Naive thymus-derived CD4-positive, alpha-beta T cell (primary cell): ENCODE measurements at regions of chr2 and their contacts with region 1.

Region 1: GRCh38 chr2:197705121-197705911 is at the start of gene MARS2:
- DNase-seq: peak; percentile 89 to 95 (median 93)
- ATAC-seq: peak; percentile 92
- H3K4me3 ChIP-seq: peak within 1 kb of the TSS; percentile 93
- H3K4me3 Mint-ChIP-seq: peak within 1 kb of the TSS; percentile 78 to 96 (median 94)
- H3K27ac ChIP-seq: peak within 1 kb of the TSS; percentile 87
- H3K27ac Mint-ChIP-seq: peak within 1 kb of the TSS; percentile 88 to 99 (median 97)
- H3K4me1 ChIP-seq: peaks cover 29 to 32% of the 10 kb centered on the region in 2 donors
- H3K4me1 Mint-ChIP-seq: peaks cover 33 to 56% (median 48%) of the 10 kb centered on the region in 7 donors
- H3K27me3 ChIP-seq: no peaks in the 10 kb centered on the region
- H3K27me3 Mint-ChIP-seq: peaks cover 0 to 13% (median 7%) of the 10 kb centered on the region in 5 donors
- total RNA-seq, gene MARS2: 8.8 to 15.4 (median 13.6) TPM

Region 2: GRCh38 chr2:196639180-196640030 is 1065.9 kb before region 1 on chr2 and contains the start of gene CCDC150:
- CTCF ChIA-PET with region 1: no interaction called
- POLR2A ChIA-PET with region 1: no interaction called
- intact Hi-C with region 1: loop called (anchors 1 kb)
- DNase-seq: peak; percentile 88 to 95 (median 94)
- ATAC-seq: peak; percentile 100
- H3K4me3 ChIP-seq: peak within 1 kb of the TSS; percentile 86
- H3K4me3 Mint-ChIP-seq: peak within 1 kb of the TSS; percentile 82 to 92 (median 88)
- H3K27ac ChIP-seq: peak within 1 kb of the TSS; percentile 48
- H3K27ac Mint-ChIP-seq: peak within 1 kb of the TSS in 8 of 9 donors; percentile 30 to 78 (median 43)
- H3K4me1 ChIP-seq: peaks cover 7 to 8% of the 10 kb centered on the region in 2 donors
- H3K4me1 Mint-ChIP-seq: peaks cover 4 to 26% (median 19%) of the 10 kb centered on the region in 7 donors
- H3K27me3 ChIP-seq: no peaks in the 10 kb centered on the region
- H3K27me3 Mint-ChIP-seq: peaks cover 0 to 15% (median 0%) of the 10 kb centered on the region in 5 donors
- total RNA-seq, gene CCDC150: 0.13 to 11.2 (median 1.2) TPM

Region 3: DNA sequence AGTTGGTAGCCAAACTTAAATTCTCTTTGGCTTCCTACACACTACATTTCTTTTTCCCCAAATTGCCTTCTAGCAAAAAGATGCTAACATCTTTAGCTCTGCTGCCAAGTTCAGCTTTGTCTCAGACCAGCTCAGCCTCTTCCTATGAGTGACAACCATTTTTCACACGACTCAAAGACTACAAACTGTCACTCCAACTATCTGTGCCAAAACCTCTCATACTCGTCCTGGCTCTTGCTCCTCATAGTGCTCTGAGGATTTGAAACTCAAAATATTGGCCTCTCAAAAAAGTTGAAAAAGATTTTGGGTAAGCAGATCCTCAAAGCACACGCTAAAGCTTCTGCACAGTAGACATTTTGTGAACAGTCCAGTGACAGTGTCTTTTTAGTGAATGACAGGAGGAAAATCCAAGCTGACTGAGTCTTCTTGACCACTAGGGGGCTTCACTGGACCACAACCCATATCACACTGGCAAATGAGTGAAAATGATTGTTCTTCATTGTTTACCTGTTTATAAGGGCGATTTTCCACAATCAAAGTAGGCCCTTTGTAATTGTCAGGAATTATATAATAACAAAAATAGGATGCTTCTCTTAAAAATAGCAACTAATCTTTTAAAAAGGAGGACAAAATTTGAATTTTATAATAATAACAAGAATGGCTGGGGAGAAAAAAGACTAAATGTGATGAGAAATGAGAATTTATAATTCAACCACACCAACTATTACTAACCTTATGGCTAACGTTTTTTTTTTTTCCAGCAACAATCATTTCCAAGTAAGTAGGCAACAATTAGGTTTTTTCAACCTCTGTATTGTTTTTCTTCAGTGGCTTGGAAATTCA is 693.3 kb before region 1 on chr2:
- CTCF ChIA-PET with region 1: no interaction called
- POLR2A ChIA-PET with region 1: no interaction called
- intact Hi-C with region 1: loop called in 1 of 2 experiments (anchors 10 kb)
- DNase-seq: peak in 6 of 9 donors; percentile 11 to 51 (median 40)
- ATAC-seq: peak; percentile 76
- H3K4me3 ChIP-seq: no peak overlapping the region
- H3K4me3 Mint-ChIP-seq: no peak overlapping the region
- H3K27ac ChIP-seq: no peak overlapping the region
- H3K27ac Mint-ChIP-seq: peak overlapping the region; percentile 5 to 90 (median 73)
- H3K4me1 ChIP-seq: peaks cover 0 to 3% of the 10 kb centered on the region in 2 donors
- H3K4me1 Mint-ChIP-seq: peaks cover 0 to 18% (median 9%) of the 10 kb centered on the region in 7 donors
- H3K27me3 ChIP-seq: no peaks in the 10 kb centered on the region
- H3K27me3 Mint-ChIP-seq: no peaks in the 10 kb centered on the region

Region 4: GRCh38 chr2:197499594-197500526 is 205.5 kb before region 1 on chr2 and contains the starts of genes HSPD1 and HSPE1:
- CTCF ChIA-PET with region 1: interaction called, 5 read pairs
- POLR2A ChIA-PET with region 1: interaction called, 5 read pairs
- intact Hi-C with region 1: loop called (anchors 1 kb)
- DNase-seq: peak; percentile 89 to 98 (median 97)
- ATAC-seq: peak; percentile 93
- H3K4me3 ChIP-seq: peak within 1 kb of the TSS; percentile 94
- H3K4me3 Mint-ChIP-seq: peak within 1 kb of the TSS; percentile 84 to 100 (median 94)
- H3K27ac ChIP-seq: peak within 1 kb of the TSS; percentile 90
- H3K27ac Mint-ChIP-seq: peak within 1 kb of the TSS; percentile 83 to 98 (median 95)
- H3K4me1 ChIP-seq: peaks cover 17 to 41% of the 10 kb centered on the region in 2 donors
- H3K4me1 Mint-ChIP-seq: peaks cover 31 to 69% (median 57%) of the 10 kb centered on the region in 7 donors
- H3K27me3 ChIP-seq: no peaks in the 10 kb centered on the region
- H3K27me3 Mint-ChIP-seq: no peaks in the 10 kb centered on the region
- total RNA-seq, gene HSPD1: 127 to 276 (median 137) TPM
- total RNA-seq, gene HSPE1: 46.3 to 127 (median 52.2) TPM

Region 5: DNA sequence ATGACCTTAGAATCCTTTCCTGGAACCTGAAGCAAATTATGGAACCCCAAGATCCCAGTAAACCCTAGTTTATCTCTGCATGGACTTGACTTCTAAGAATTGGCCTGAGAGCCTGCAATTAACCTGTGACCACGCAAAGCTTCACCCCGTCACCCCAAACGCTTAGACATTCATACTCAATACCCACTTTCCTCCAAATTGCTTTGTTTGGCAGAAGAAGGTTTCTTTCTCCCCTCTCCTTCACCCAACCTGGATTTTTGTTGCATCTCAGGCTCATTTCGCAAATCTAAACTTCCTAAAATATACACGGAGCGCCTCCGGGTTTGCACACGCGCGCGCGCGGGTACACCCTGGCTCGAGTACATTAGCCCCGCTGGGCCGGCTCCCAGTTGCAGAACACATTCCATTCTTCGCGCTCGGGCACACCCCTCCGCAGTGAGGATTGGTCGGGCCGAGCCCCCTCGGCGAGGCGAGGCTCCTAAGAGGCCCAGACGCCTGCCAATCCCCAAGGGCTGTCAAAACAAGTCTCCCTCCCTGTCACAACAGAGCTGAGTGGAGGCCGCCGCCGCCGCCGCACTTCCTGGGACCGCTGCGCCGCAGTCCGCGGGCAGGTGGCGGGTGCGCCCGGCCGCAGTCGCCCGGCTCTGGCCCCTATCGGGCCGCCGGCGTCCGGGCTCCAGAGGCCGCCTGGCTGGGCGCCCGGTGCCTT is 98.9 kb after region 1 on chr2 and contains the start of gene PLCL1:
- CTCF ChIA-PET with region 1: no interaction called
- POLR2A ChIA-PET with region 1: no interaction called
- intact Hi-C with region 1: loop called (anchors 1 kb)
- DNase-seq: peak; percentile 73 to 94 (median 91)
- ATAC-seq: peak; percentile 98
- H3K4me3 ChIP-seq: peak within 1 kb of the TSS; percentile 67
- H3K4me3 Mint-ChIP-seq: peak within 1 kb of the TSS; percentile 92 to 98 (median 96)
- H3K27ac ChIP-seq: peak within 1 kb of the TSS; percentile 89
- H3K27ac Mint-ChIP-seq: peak within 1 kb of the TSS; percentile 58 to 96 (median 92)
- H3K4me1 ChIP-seq: peaks cover 10 to 29% of the 10 kb centered on the region in 2 donors
- H3K4me1 Mint-ChIP-seq: peaks cover 33 to 55% (median 48%) of the 10 kb centered on the region in 7 donors
- H3K27me3 ChIP-seq: peaks cover 0 to 6% of the 10 kb centered on the region in 2 donors
- H3K27me3 Mint-ChIP-seq: peaks cover 0 to 49% (median 0%) of the 10 kb centered on the region in 5 donors
- total RNA-seq, gene PLCL1: 1.8 to 33.7 (median 28.5) TPM

Region 6: GRCh38 chr2:198127627-198128026 is 422.3 kb after region 1 on chr2:
- CTCF ChIA-PET with region 1: no interaction called
- POLR2A ChIA-PET with region 1: no interaction called
- intact Hi-C with region 1: loop called (anchors 5 kb)
- DNase-seq: peak in 8 of 9 donors; percentile 24 to 66 (median 48)
- ATAC-seq: peak; percentile 81
- H3K4me3 ChIP-seq: no peak overlapping the region
- H3K4me3 Mint-ChIP-seq: no peak overlapping the region
- H3K27ac ChIP-seq: no peak overlapping the region
- H3K27ac Mint-ChIP-seq: peak overlapping the region in 1 of 9 donors; percentile 10
- H3K4me1 ChIP-seq: no peaks in the 10 kb centered on the region
- H3K4me1 Mint-ChIP-seq: peaks cover 0 to 21% (median 11%) of the 10 kb centered on the region in 7 donors
- H3K27me3 ChIP-seq: no peaks in the 10 kb centered on the region
- H3K27me3 Mint-ChIP-seq: peaks cover 0 to 3% (median 0%) of the 10 kb centered on the region in 5 donors